HCT116 (cell line): ENCODE measurements at regions of chr19 and their contacts with region 1.

Region 1: GRCh38 chr19:14689598-14690503 is at the start of gene ZNF333:
- DNase-seq: peak; percentile 85
- ATAC-seq: peak; percentile 96
- H3K4me3 ChIP-seq: peak within 1 kb of the TSS; percentile 79 to 90
- H3K27ac ChIP-seq: peak within 1 kb of the TSS; percentile 88
- H3K4me1 ChIP-seq: peaks cover 3 to 7% of the 10 kb centered on the region in 2 experiments; a peak in 3 of 4 replicates
- H3K27me3 ChIP-seq: no peaks in the 10 kb centered on the region
- CTCF ChIP-seq: no peak
- POLR2A ChIP-seq: peak; percentile 49
- RAD21 ChIP-seq: no peak
- total RNA-seq, gene ZNF333: 9.2 TPM

Region 2: GRCh38 chr19:14556662-14557188 is 133.1 kb before region 1 on chr19:
- CTCF ChIA-PET with region 1: interaction called, 9 read pairs
- POLR2A ChIA-PET with region 1: no interaction called
- RAD21 ChIA-PET with region 1: no interaction called
- intact Hi-C with region 1: loop called (anchors 5 kb)
- DNase-seq: peak; percentile 67
- ATAC-seq: peak; percentile 83
- H3K4me3 ChIP-seq: peak overlapping the region; percentile 13 to 23; a peak in 3 of 4 replicates
- H3K27ac ChIP-seq: peak overlapping the region; percentile 51
- H3K4me1 ChIP-seq: peaks cover 33 to 47% of the 10 kb centered on the region in 2 experiments
- H3K27me3 ChIP-seq: no peaks in the 10 kb centered on the region
- CTCF ChIP-seq: peak; percentile 57 to 97 (median 96); a peak in 5 of 6 replicates
- POLR2A ChIP-seq: no peak
- RAD21 ChIP-seq: no peak; the same call in 1 of the 2 replicates